Aorta (tissue), 5 donors: ENCODE measurements at regions of chr17 and their contacts with region 1.

Region 1: GRCh38 chr17:12744298-12744697 is 45.0 kb upstream of the ARHGAP44 start:
- DNase-seq: no peak
- ATAC-seq: peak; percentile 53
- H3K4me3 ChIP-seq: no peak overlapping the region
- H3K27ac ChIP-seq: peak overlapping the region in 1 of 2 donors; percentile 42
- H3K4me1 ChIP-seq: peaks cover 4 to 5% of the 10 kb centered on the region in 2 donors
- H3K27me3 ChIP-seq: no peaks in the 10 kb centered on the region

Region 2: DNA sequence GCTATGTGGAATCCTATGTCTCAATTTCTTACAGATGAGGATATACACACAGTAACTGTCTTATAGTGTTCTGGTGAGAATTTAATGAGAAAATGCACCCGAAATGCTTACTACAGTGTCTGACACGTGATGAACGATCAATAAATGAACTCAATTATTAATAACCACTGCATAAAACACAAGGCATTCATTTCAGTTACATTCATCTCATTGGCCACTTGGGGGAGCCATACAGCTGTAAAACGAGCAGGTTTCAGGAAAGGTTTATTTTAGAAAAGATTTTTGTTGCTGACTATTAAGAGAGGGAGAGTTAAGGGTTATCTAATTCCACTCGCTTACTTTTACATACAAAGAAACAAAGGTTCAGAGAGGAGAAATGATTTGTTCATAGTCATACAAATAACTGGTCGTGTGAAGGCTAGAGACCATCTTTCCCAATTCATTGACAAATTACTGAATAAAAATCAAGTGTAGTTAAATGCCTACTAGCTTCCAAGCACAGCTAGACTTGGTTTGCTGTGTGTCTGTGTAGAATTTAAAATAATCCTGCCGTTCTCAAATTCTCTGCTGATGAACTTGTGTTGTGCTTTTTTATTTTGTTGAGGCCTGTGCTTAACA is 563.5 kb before region 1 on chr17:
- intact Hi-C with region 1: loop called (anchors 2 to 5 kb)
- DNase-seq: no peak
- ATAC-seq: peak; percentile 76
- H3K4me3 ChIP-seq: no peak overlapping the region
- H3K27ac ChIP-seq: no peak overlapping the region
- H3K4me1 ChIP-seq: peaks cover 0 to 4% of the 10 kb centered on the region in 2 donors
- H3K27me3 ChIP-seq: no peaks in the 10 kb centered on the region

Region 3: DNA sequence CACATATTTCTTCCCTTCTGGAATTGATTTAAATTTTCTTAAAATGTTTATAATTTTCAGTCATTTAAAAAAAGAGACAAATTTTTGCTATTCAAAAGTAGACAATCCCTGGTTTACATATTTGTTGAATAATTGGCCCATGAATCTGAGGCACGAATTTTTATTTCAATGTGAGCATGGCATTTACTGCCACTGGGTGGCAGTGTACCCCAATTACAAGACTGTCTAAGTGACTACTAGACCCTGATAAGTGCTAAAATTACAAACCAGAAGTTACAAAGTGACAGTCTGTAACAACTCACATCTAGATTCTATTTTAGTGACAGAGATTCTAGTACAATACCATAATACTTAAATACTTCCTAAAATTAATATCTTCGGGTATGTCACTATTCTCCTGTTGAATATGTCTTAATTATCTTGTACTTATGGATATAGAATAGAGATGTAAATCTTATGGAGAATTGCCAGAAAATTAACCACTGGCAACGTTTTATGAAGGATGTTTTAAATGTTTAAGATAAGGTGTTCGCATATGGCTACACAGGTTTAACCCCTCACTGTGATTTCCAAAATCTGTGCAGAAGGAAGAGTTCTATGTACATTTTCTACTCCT is 487.8 kb before region 1 on chr17:
- intact Hi-C with region 1: loop called (anchors 5 to 10 kb)
- DNase-seq: no peak
- ATAC-seq: peak; percentile 77
- H3K4me3 ChIP-seq: peak overlapping the region; percentile 23 to 35
- H3K27ac ChIP-seq: no peak overlapping the region
- H3K4me1 ChIP-seq: no peaks in the 10 kb centered on the region
- H3K27me3 ChIP-seq: no peaks in the 10 kb centered on the region

Region 4: DNA sequence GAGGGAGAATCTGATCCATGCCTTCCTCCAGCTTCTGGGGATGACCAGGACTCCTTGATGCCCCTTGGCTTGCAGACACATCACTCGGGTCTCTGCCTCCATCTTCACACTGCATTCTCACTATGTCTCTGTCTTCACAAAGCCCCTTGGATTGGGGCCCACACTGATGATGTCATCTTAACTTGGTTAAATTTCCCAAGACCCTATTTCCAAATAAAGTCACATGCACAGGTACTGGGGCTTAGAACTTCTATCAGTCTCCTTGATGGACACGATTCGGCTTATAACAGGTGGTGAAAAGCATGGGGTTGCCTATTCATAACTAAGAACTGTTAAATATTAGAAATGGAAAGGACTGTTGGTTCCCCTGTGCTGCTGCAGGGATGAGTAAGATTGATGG is 190.6 kb before region 1 on chr17:
- intact Hi-C with region 1: loop called (anchors 2 to 10 kb)
- DNase-seq: no peak
- ATAC-seq: no peak
- H3K4me3 ChIP-seq: no peak overlapping the region
- H3K27ac ChIP-seq: peak overlapping the region; percentile 64 to 81
- H3K4me1 ChIP-seq: peaks cover 11 to 14% of the 10 kb centered on the region in 2 donors
- H3K27me3 ChIP-seq: no peaks in the 10 kb centered on the region

Region 5: DNA sequence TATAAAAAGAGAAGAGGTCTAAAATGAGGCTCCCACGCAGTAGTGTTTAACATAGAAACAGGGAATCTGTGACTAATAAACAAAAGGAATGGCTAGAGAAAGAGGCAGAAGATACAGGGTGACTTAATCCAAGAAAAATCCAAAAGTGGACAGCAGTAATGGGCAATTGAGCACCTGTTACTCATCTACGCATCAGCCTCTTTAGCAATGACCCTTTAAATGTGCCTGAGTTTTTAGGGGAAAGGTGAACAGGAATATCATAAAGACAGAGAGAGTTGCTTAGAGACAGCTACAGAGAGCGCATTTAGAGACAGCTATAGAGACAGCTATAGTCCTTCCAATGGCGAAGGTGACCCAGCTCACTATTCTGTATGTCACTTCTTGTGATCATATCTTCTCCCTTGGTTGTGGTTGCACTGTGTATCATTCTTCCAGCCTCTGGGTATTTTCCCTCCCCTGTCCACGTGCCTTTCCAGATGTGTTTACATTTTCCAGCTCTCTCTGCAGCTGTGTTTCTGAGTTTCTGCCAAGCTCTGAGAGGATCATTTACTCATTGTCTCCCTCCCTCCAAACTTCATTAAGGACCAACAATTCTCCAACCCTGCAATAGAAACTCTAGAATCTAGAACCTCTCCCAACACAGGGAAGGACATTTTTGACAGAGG is 17.1 kb before region 1 on chr17:
- intact Hi-C with region 1: no loop called
- DNase-seq: no peak
- ATAC-seq: no peak
- H3K4me3 ChIP-seq: no peak overlapping the region
- H3K27ac ChIP-seq: peak overlapping the region; percentile 60 to 75
- H3K4me1 ChIP-seq: peaks cover 0 to 11% of the 10 kb centered on the region in 2 donors
- H3K27me3 ChIP-seq: no peaks in the 10 kb centered on the region

Region 6: GRCh38 chr17:13002766-13003451 is 258.6 kb after region 1 on chr17:
- intact Hi-C with region 1: loop called in 1 of 2 experiments (anchors 5 kb)
- DNase-seq: peak; percentile 73 to 93
- ATAC-seq: peak; percentile 90
- H3K4me3 ChIP-seq: no peak overlapping the region
- H3K27ac ChIP-seq: no peak overlapping the region
- H3K4me1 ChIP-seq: no peaks in the 10 kb centered on the region
- H3K27me3 ChIP-seq: no peaks in the 10 kb centered on the region